Lower leg skin (tissue), 4 donors: ENCODE measurements at regions of chr10 and their contacts with region 1.

Region 1: GRCh38 chr10:637771-638195 is 51.7 kb downstream of the DIP2C start:
- DNase-seq: no peak
- H3K4me3 ChIP-seq: no peak overlapping the region
- CTCF ChIP-seq: no peak
- POLR2A ChIP-seq: no peak

Region 2: DNA sequence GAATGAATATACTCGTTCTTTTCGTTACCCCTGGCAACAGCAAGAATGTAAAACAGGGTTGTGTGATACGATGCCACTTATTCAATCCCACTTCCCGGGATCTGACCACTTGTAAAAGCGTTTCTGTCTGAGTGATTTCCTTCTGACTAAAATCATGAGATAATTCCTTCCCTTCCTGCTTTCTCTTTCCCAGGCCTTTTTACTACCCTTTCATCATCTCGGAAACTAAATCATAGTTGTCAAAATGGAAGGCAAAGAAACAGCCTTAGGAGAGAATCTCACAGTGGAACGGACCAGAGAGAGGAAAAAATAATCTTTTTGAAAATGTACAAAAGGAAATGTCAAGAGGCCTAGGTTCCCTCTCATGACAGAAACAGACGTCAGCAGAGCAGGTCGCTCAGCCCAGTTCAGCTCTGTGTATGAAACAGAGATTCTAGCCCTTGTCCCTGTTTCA is 21.9 kb after region 1 on chr10:
- intact Hi-C with region 1: loop called (anchors 1 kb)
- DNase-seq: no peak
- H3K4me3 ChIP-seq: no peak overlapping the region
- CTCF ChIP-seq: no peak
- POLR2A ChIP-seq: no peak